Mucosa of descending colon (tissue), 3 donors: ENCODE measurements at regions of chr15 and their contacts with region 1.

Region 1: GRCh38 chr15:28123408-28124023 is 24.4 kb upstream of the OCA2 start:
- DNase-seq: peak in 2 of 3 donors; percentile 78 to 88
- ATAC-seq: peak; percentile 90
- H3K4me3 ChIP-seq: no peak overlapping the region
- H3K4me1 ChIP-seq: no peaks in the 10 kb centered on the region
- CTCF ChIP-seq: peak; percentile 49

Region 2: GRCh38 chr15:28021281-28022039 is 102.1 kb before region 1 on chr15:
- intact Hi-C with region 1: loop called in 1 of 2 experiments (anchors 10 kb)
- DNase-seq: peak; percentile 50 to 76 (median 68)
- ATAC-seq: peak; percentile 71
- H3K4me3 ChIP-seq: no peak overlapping the region
- H3K4me1 ChIP-seq: no peaks in the 10 kb centered on the region
- CTCF ChIP-seq: no peak